ENCODE measurements at regions of chr19 and their contacts with region 1.

Region 1: GRCh38 chr19:21505459-21506451 is at the start of gene ZNF429:
- DNase-seq: peak; percentile 96
- H3K4me3 Mint-ChIP-seq: peak within 1 kb of the TSS; percentile 95
- H3K27ac Mint-ChIP-seq: peak within 1 kb of the TSS; percentile 97
- H3K4me1 Mint-ChIP-seq: peaks cover 30% of the 10 kb centered on the region
- H3K27me3 Mint-ChIP-seq: no peaks in the 10 kb centered on the region
- total RNA-seq, gene ZNF429: 10.2 TPM

Region 2: GRCh38 chr19:21082011-21082975 is 423.5 kb before region 1 on chr19 and contains the start of gene ZNF714:
- CTCF ChIA-PET with region 1: no interaction called
- intact Hi-C with region 1: loop called (anchors 5 kb)
- DNase-seq: peak; percentile 93
- H3K4me3 Mint-ChIP-seq: peak within 1 kb of the TSS; percentile 98
- H3K27ac Mint-ChIP-seq: peak within 1 kb of the TSS; percentile 95
- H3K4me1 Mint-ChIP-seq: peaks cover 29% of the 10 kb centered on the region
- H3K27me3 Mint-ChIP-seq: no peaks in the 10 kb centered on the region
- total RNA-seq, gene ZNF714: 21.1 to 23.1 TPM

Region 3: DNA sequence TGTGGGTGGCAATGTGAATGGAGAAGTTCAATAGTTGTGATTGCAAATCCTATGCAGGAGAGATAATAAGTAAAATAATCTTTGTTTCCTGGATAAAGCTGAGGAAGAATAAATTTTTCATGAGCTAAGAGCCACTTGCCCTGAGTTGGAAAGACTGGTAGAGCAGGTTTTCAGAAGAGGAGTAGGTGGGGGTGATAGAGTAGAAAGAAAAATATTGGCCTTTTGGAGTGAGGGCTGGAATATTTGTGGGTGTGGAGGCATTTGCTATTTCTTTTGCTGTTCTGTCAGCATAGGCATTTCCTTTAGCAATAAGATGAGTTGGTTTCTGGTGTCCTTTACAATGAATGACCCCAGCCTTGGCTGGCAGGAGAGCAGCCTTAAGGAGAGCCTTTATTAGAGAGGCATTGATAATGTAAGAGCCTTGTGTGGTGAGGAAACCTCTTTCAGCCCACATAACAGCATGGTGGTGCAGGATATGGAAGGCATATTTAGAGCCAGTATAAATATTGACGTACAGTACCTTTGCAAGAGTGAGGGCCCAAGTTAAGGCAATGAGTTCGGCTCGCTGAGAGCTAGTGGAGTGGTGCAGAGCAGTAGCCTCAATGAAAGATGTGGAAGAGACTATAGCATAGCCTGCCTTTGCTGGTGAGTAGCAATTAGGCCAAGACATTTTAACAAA is 375.5 kb before region 1 on chr19:
- CTCF ChIA-PET with region 1: no interaction called
- intact Hi-C with region 1: no loop called
- DNase-seq: no peak
- H3K4me3 Mint-ChIP-seq: no peak overlapping the region
- H3K27ac Mint-ChIP-seq: no peak overlapping the region
- H3K4me1 Mint-ChIP-seq: no peaks in the 10 kb centered on the region
- H3K27me3 Mint-ChIP-seq: peaks cover 5% of the 10 kb centered on the region

Region 4: DNA sequence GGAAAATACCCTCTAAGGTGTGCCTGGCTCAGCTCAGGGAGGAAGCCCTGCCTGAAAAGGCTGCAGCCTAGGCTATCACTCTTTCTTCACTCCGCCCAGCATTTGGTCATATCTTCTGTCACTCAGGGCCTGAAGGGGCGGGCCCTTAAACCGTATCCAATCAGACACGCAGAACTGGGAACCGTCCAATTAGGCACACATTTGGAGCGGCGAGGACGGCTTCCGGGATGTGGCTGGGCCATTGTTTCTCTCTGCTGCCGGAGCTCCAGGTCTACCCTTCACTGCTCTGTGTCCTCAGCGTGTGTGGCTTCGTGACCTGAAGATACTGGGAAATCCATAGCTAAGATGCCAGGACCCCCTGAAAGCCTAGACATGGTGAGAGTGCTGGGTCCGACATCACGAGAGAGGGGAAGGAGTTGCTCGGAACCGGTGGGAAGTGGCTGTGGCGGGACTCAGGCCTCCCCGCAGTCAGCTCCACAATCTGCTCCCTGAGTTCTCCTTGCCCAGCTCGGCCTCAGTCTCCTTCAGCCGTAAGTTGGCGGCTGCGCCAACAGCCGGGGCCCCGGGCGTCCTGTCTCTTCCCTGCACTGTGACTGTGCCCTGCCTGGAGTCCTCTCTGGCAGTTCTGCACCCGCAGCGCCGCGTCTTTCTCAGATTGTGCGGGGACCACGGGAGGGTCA is 108.7 kb before region 1 on chr19 and contains the start of gene ZNF493:
- CTCF ChIA-PET with region 1: no interaction called
- intact Hi-C with region 1: loop called (anchors 2 kb)
- DNase-seq: peak; percentile 97
- H3K4me3 Mint-ChIP-seq: peak within 1 kb of the TSS; percentile 96
- H3K27ac Mint-ChIP-seq: peak within 1 kb of the TSS; percentile 92
- H3K4me1 Mint-ChIP-seq: peaks cover 21% of the 10 kb centered on the region
- H3K27me3 Mint-ChIP-seq: no peaks in the 10 kb centered on the region
- total RNA-seq, gene ZNF493: 10.3 to 10.9 TPM

Region 5: DNA sequence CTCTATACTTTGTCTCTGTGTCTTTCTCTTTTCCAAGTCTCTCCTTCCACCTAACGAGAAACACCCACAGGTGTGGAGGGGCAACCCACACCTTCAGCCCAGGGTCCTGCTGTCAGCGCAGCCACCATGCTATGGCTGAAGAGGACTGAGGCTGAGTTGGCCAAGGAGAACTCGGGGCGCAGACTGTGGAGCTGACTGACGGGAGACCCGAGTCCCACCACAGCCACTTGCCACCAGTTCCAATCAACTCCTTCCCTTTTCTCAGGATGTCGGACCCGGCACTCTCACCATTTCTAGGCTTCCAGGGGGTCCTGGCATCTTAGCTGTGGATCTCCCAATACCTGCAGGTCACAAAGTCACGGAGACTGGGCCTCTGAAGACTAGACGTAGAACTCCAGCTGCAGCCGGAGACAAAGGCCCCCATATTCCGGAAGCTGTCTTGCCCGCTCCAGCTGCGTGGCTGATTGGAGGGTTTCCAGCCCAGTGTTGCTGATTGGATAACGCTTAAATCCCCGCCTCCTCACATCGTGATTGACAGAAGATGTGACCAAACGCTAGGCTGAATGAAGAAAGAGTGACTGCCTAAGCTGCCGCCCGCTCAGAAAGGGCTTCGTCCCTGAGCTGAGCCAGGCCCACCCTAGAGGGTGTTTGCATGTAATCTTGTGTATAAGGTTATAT is 63.2 kb after region 1 on chr19:
- CTCF ChIA-PET with region 1: interaction called, 4 read pairs
- intact Hi-C with region 1: loop called (anchors 1 kb)
- DNase-seq: peak; percentile 94
- H3K4me3 Mint-ChIP-seq: peak overlapping the region; percentile 99
- H3K27ac Mint-ChIP-seq: peak overlapping the region; percentile 99
- H3K4me1 Mint-ChIP-seq: peaks cover 30% of the 10 kb centered on the region
- H3K27me3 Mint-ChIP-seq: no peaks in the 10 kb centered on the region

Region 6: GRCh38 chr19:21638776-21639175 is 133.0 kb after region 1 on chr19:
- CTCF ChIA-PET with region 1: no interaction called
- intact Hi-C with region 1: no loop called
- DNase-seq: no peak
- H3K4me3 Mint-ChIP-seq: no peak overlapping the region
- H3K27ac Mint-ChIP-seq: no peak overlapping the region
- H3K4me1 Mint-ChIP-seq: no peaks in the 10 kb centered on the region
- H3K27me3 Mint-ChIP-seq: no peaks in the 10 kb centered on the region

Region 7: DNA sequence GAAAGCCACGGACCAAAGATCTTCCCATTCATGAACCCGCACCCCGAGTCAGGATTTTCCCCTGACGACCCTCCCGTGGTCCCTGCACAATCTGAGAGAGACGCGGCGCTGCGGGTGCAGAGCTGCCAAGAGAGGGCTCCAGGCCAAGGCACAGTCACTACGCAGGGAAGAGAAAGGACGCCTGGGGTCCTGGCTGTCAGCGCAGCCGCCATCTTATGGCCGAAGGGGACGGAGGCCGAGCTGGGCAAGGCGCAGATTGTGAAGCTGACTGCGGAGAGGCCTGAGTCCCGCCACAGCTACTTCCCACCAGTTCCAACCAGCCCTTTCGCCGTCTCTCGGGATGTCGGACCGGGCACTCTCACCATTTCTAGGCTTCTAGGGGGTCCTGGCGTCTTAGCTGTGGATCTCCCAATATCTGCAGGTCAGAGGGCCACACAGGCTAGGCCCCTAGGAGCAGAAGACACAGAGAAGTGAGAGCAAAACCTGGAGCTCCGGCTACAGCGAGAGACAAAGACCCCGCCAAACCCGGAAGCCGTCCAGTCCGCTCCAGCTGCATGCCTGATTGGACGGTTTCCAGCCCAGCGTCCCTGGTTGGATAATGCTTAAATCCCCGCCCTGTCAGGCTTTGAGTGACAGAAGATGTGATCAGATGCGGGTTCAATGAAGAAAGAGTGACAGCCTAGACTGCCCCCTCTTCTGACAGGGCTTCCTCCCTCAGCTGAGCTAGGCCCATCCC is 261.5 kb after region 1 on chr19 and contains the start of gene ZNF100:
- CTCF ChIA-PET with region 1: interaction called, 8 read pairs
- intact Hi-C with region 1: loop called (anchors 10 kb)
- DNase-seq: peak; percentile 94
- H3K4me3 Mint-ChIP-seq: peak within 1 kb of the TSS; percentile 78
- H3K27ac Mint-ChIP-seq: peak within 1 kb of the TSS; percentile 84
- H3K4me1 Mint-ChIP-seq: peaks cover 24% of the 10 kb centered on the region
- H3K27me3 Mint-ChIP-seq: no peaks in the 10 kb centered on the region
- total RNA-seq, gene ZNF100: 19.3 to 22.7 TPM

Region 8: DNA sequence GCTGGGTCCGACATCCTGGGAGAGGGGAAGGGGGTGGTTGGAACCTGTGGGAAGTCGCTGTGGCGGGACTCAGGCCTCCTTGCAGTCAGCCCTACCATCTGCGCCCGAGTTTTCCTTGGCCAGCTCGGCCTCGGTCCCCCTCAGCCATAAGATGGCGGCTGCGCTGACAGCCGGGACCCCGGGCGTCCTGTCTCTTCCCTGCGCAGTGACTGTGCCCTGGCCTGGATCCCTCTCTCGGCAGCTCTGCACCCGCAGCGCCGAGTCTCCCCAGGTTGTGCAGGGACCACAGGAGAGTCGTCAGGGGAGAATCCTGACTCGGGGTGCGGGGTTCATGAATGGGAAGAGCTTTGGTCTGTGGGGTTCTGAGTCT is 546.9 kb after region 1 on chr19:
- CTCF ChIA-PET with region 1: no interaction called
- intact Hi-C with region 1: loop called (anchors 1 kb)
- DNase-seq: peak; percentile 26
- H3K4me3 Mint-ChIP-seq: peak overlapping the region; percentile 94
- H3K27ac Mint-ChIP-seq: peak overlapping the region; percentile 85
- H3K4me1 Mint-ChIP-seq: no peaks in the 10 kb centered on the region
- H3K27me3 Mint-ChIP-seq: no peaks in the 10 kb centered on the region